Activated B cell treated with CpG ODN at 0.5 μM for 24 hours (primary cell): ENCODE measurements at regions of chr5 and their contacts with region 1.

Region 1: GRCh38 chr5:81851481-81852178 is 100.7 kb upstream of the SSBP2 start:
- DNase-seq: peak; percentile 83
- ATAC-seq: peak; percentile 94
- H3K4me3 Mint-ChIP-seq: peak overlapping the region; percentile 93
- H3K27ac Mint-ChIP-seq: peak overlapping the region; percentile 94
- H3K4me1 Mint-ChIP-seq: peaks cover 35% of the 10 kb centered on the region
- H3K27me3 Mint-ChIP-seq: no peaks in the 10 kb centered on the region
- CTCF ChIP-seq: no peak

Region 2: DNA sequence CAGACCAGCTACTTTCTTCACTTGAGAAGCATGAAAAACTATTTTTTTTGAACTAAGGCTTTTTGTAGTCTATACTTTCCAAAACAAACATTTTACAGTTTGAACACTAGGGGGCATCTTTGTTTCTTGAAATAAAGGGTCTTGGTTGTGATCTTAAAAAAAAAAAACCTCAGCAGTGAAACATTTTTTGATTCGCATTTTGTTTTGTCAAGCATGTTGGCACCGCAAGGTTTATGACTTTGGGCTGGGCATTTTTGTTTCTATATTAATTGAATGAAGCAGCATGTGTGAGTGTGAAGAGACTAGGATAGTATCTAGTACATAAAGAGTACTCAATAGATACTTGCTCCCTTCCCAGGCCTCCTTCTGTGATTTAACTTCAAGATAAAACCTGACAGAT is 426.1 kb before region 1 on chr5:
- CTCF ChIA-PET with region 1: no interaction called
- POLR2A ChIA-PET with region 1: no interaction called
- intact Hi-C with region 1: loop called (anchors 5 kb)
- DNase-seq: no peak
- ATAC-seq: peak; percentile 50
- H3K4me3 Mint-ChIP-seq: no peak overlapping the region
- H3K27ac Mint-ChIP-seq: no peak overlapping the region
- H3K4me1 Mint-ChIP-seq: peaks cover 2% of the 10 kb centered on the region
- H3K27me3 Mint-ChIP-seq: no peaks in the 10 kb centered on the region
- CTCF ChIP-seq: peak; percentile 41

Region 3: GRCh38 chr5:81642210-81642609 is 209.4 kb before region 1 on chr5:
- CTCF ChIA-PET with region 1: no interaction called
- POLR2A ChIA-PET with region 1: no interaction called
- intact Hi-C with region 1: loop called (anchors 5 kb)
- DNase-seq: no peak
- ATAC-seq: no peak
- H3K4me3 Mint-ChIP-seq: no peak overlapping the region
- H3K27ac Mint-ChIP-seq: no peak overlapping the region
- H3K4me1 Mint-ChIP-seq: no peaks in the 10 kb centered on the region
- H3K27me3 Mint-ChIP-seq: no peaks in the 10 kb centered on the region
- CTCF ChIP-seq: no peak

Region 4: DNA sequence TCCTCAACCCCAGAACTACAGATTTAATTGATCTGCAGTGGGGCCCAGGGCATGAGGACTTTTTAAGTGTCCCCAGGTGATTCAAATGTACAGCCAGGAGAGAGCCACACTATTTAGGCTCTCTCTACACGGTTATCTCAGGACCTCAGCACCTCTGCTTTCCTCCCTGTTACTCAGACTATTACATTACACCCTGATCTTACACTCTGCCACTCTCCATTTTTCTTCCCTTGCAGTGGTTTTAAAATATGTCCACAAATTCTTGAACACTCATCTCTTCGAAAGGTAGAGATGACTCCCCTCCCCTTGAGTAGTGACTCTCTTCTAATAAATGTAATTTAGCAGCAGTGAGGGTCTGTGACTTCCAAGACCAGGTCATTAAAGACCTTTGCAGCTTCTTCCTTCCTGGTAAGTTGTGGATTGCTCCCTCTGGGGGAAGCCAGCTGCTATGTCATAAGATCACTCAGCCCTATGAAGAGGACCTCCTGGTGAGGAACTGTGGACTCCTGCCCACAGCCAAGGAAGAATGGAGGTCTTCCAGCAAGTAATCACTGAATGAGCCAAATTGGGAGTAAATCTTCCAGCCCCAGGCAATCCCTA is 13.2 kb before region 1 on chr5:
- CTCF ChIA-PET with region 1: interaction called, 10 read pairs
- POLR2A ChIA-PET with region 1: interaction called, 5 read pairs
- intact Hi-C with region 1: no loop called
- DNase-seq: no peak
- ATAC-seq: peak; percentile 73
- H3K4me3 Mint-ChIP-seq: no peak overlapping the region
- H3K27ac Mint-ChIP-seq: no peak overlapping the region
- H3K4me1 Mint-ChIP-seq: peaks cover 2% of the 10 kb centered on the region
- H3K27me3 Mint-ChIP-seq: no peaks in the 10 kb centered on the region
- CTCF ChIP-seq: no peak

Region 5: DNA sequence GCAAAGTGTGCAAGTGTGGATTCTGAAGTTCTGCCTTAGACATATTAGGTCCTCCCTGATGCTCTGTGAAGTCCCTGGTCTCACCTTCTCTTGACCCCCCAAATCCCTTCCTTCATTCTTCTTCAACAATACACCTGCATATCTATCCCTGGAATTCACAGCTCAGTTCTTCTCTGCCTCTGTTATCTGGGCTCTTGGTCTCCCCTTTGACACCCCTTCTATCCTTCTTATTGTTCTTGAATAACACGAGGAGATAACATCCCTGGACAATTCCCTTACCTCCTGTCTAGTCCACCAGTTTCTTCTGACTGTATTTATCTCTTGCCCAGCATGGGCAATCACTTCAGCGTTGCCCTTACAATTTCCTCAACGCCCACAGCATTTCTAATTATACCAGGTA is 15.4 kb after region 1 on chr5:
- CTCF ChIA-PET with region 1: no interaction called
- POLR2A ChIA-PET with region 1: no interaction called
- intact Hi-C with region 1: no loop called
- DNase-seq: no peak
- ATAC-seq: no peak
- H3K4me3 Mint-ChIP-seq: no peak overlapping the region
- H3K27ac Mint-ChIP-seq: no peak overlapping the region
- H3K4me1 Mint-ChIP-seq: no peaks in the 10 kb centered on the region
- H3K27me3 Mint-ChIP-seq: peaks cover 2% of the 10 kb centered on the region
- CTCF ChIP-seq: no peak

Region 6: DNA sequence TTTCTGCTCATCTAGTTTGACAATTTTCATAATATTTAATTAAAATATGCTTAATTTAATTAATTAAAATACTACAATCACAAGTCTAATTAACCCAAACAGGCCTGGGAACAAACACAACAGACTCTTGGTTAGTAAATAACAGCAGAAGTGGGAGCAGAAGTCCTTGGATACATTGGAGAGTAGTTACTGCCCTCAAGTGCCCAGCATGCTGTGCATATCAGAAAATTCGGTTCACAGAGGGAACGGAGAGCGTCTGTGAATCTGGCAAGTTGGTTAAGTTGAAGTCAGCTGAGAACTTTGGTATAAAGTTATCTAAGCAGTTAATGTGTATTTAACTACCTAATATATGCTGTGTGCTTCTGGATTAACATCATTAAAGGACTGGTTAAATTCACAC is 33.2 kb after region 1 on chr5:
- CTCF ChIA-PET with region 1: no interaction called
- POLR2A ChIA-PET with region 1: no interaction called
- intact Hi-C with region 1: no loop called
- DNase-seq: no peak
- ATAC-seq: no peak
- H3K4me3 Mint-ChIP-seq: no peak overlapping the region
- H3K27ac Mint-ChIP-seq: no peak overlapping the region
- H3K4me1 Mint-ChIP-seq: no peaks in the 10 kb centered on the region
- H3K27me3 Mint-ChIP-seq: peaks cover 5% of the 10 kb centered on the region
- CTCF ChIP-seq: no peak

Region 7: GRCh38 chr5:82058710-82059109 is 207.1 kb after region 1 on chr5:
- CTCF ChIA-PET with region 1: no interaction called
- POLR2A ChIA-PET with region 1: no interaction called
- intact Hi-C with region 1: no loop called
- DNase-seq: no peak
- ATAC-seq: no peak
- H3K4me3 Mint-ChIP-seq: no peak overlapping the region
- H3K27ac Mint-ChIP-seq: no peak overlapping the region
- H3K4me1 Mint-ChIP-seq: peaks cover 4% of the 10 kb centered on the region
- H3K27me3 Mint-ChIP-seq: no peaks in the 10 kb centered on the region
- CTCF ChIP-seq: no peak

Region 8: DNA sequence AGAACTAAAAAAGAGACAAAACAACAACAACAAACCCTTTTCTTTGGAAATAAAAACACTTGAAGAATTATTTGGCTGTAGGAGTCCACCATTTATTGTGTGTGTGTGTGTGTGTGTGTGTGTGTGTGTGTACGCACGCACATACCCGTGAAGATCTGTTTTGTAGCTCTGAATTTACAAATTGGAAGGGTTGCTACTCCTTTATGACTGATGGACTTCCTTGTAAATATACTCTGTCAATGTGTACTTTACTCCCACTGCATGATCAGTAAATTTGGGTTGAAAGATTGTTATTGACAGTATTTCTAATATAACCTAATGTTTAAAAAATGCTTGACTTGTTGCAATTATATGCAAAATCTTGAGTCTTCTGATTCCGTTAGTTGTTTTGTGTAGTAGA is 268.3 kb after region 1 on chr5:
- CTCF ChIA-PET with region 1: no interaction called
- POLR2A ChIA-PET with region 1: interaction called, 15 read pairs
- intact Hi-C with region 1: no loop called
- DNase-seq: no peak
- ATAC-seq: no peak
- H3K4me3 Mint-ChIP-seq: no peak overlapping the region
- H3K27ac Mint-ChIP-seq: no peak overlapping the region
- H3K4me1 Mint-ChIP-seq: no peaks in the 10 kb centered on the region
- H3K27me3 Mint-ChIP-seq: no peaks in the 10 kb centered on the region
- CTCF ChIP-seq: no peak

Region 9: GRCh38 chr5:82165740-82166530 is 314.3 kb after region 1 on chr5:
- CTCF ChIA-PET with region 1: no interaction called
- POLR2A ChIA-PET with region 1: no interaction called
- intact Hi-C with region 1: loop called (anchors 5 kb)
- DNase-seq: no peak
- ATAC-seq: peak; percentile 84
- H3K4me3 Mint-ChIP-seq: no peak overlapping the region
- H3K27ac Mint-ChIP-seq: no peak overlapping the region
- H3K4me1 Mint-ChIP-seq: peaks cover 3% of the 10 kb centered on the region
- H3K27me3 Mint-ChIP-seq: no peaks in the 10 kb centered on the region
- CTCF ChIP-seq: no peak

Region 10: DNA sequence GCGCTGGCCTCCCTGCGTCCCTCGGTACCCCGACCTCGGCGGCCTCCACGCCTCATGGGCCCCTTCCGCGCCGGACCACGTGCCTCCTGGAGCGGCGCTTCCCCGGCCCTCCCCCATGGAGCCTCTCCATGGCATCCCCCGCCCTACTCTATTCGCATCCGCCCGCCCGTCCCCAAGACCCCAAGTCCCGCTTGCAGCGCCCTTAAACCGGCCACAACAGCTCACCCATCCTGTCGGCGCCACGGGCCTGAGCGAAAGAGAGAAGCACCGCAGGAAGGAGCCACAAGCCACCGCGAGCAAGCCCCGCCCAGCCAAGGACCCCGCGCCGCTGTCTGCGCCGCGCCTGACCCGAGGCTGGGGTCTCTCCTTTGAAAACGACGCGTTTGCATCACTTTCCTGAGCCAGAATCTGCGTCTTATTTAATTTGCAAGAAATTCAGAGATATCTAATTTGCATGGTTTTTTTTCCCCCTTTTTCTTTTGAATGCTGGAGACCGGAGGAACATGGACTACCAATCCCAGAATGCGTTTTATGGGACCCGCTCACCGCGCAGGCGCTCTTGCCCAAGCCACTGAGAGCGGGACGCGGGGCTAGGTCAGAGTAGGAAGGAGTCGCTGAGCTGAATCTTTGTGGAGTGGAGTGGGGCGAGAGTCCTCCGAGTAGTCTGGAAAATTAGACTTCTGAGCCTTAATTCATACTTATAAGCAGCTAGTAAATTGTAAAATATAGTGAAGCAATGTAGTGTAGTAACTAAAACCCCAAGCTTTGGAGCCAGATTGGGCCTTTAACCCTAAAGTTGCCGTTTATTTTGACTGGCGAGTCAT is 426.7 kb after region 1 on chr5 and contains the start of gene RPS23:
- CTCF ChIA-PET with region 1: no interaction called
- POLR2A ChIA-PET with region 1: interaction called, 20 read pairs
- intact Hi-C with region 1: loop called (anchors 2 kb)
- DNase-seq: peak; percentile 79
- ATAC-seq: peak; percentile 92
- H3K4me3 Mint-ChIP-seq: peak within 1 kb of the TSS; percentile 96
- H3K27ac Mint-ChIP-seq: peak within 1 kb of the TSS; percentile 99
- H3K4me1 Mint-ChIP-seq: peaks cover 44% of the 10 kb centered on the region
- H3K27me3 Mint-ChIP-seq: no peaks in the 10 kb centered on the region
- CTCF ChIP-seq: no peak
- total RNA-seq, gene RPS23: 4,125 and 4,753 TPM in 2 replicates

Region 11: GRCh38 chr5:82707741-82708140 is 856.1 kb after region 1 on chr5:
- CTCF ChIA-PET with region 1: no interaction called
- POLR2A ChIA-PET with region 1: no interaction called
- intact Hi-C with region 1: no loop called
- DNase-seq: no peak
- ATAC-seq: no peak
- H3K4me3 Mint-ChIP-seq: no peak overlapping the region
- H3K27ac Mint-ChIP-seq: no peak overlapping the region
- H3K4me1 Mint-ChIP-seq: no peaks in the 10 kb centered on the region
- H3K27me3 Mint-ChIP-seq: peaks cover 3% of the 10 kb centered on the region
- CTCF ChIP-seq: no peak